Endothelial cell of umbilical vein (primary cell): ENCODE measurements at regions of chr4 and their contacts with region 1.

Region 1: DNA sequence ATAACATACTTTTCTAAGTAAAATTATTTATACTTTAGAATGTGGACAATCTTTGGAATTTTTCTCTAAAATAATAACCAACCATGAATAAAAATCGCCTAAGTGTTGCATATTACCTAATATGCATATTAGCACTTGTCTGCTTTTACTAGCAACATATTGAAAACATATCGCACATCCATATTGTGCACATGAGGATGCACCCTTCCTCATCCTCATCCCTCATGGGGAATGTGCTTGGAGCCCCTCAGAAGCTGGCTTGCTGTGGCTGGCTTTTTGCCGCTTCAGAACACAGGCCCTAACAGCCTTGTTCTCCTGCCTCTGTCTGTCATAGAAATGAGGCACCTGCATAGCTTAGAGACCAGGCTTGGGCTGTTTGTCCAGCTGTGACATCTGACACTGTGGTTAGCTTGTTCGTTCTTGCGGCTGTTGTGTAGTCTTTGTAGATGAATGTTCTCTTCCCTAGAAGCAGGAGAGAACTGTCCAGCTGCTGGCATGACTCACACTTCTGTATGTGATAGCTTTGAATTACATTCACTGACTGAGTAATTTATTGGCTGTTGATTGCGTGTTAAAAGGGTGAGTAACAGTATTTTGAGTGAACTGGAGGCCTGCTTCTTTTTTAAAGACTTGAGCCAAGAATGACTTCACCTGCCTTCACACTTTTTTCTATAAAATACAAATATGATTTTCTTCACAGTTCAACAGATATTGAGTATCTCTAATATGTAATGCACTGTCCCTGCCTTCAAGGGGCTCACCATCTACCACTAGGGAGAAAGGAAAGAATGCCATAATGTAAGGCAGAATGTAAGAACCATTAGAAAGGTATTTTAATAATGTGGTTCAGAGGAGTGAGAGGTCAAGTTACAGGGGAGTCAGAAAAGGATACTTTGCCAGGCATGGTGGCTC is 81.9 kb downstream of the HMGB2 start:
- DNase-seq: peak; percentile 99
- H3K4me3 ChIP-seq: no peak overlapping the region
- H3K27ac ChIP-seq: peak overlapping the region; percentile 67
- H3K4me1 ChIP-seq: peaks cover 25% of the 10 kb centered on the region
- H3K27me3 ChIP-seq: no peaks in the 10 kb centered on the region
- CTCF ChIP-seq: no peak
- POLR2A ChIP-seq: peak; percentile 41

Region 2: DNA sequence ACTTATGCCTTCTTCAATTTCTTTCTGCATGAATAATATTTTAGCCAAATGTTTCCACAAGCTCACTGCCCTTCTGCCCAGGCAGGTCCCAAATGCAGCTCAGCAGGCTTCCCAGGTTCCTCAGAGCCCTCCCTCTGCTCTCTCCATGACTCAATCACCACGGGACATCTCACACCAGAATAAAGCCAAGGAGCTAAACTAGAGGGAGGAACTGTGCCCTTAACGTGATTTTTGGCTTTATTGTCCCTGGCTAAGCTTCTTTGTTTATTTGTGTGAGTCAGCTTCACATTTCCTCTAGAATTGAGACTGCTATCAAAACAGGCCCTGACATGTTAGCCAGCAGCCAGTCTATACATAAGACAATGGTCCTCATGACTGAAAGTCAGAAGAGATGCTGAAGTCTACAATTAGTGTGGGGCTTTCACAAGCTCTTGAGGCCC is 270.1 kb before region 1 on chr4:
- CTCF ChIA-PET with region 1: interaction called, 3 read pairs
- POLR2A ChIA-PET with region 1: interaction called, 3 read pairs
- dilution Hi-C with region 1: no loop called
- intact Hi-C with region 1: loop called (anchors 1 kb)
- DNase-seq: peak; percentile 92
- H3K4me3 ChIP-seq: no peak overlapping the region
- H3K27ac ChIP-seq: peak overlapping the region; percentile 82
- H3K4me1 ChIP-seq: peaks cover 25% of the 10 kb centered on the region
- H3K27me3 ChIP-seq: no peaks in the 10 kb centered on the region
- CTCF ChIP-seq: no peak
- POLR2A ChIP-seq: no peak

Region 3: DNA sequence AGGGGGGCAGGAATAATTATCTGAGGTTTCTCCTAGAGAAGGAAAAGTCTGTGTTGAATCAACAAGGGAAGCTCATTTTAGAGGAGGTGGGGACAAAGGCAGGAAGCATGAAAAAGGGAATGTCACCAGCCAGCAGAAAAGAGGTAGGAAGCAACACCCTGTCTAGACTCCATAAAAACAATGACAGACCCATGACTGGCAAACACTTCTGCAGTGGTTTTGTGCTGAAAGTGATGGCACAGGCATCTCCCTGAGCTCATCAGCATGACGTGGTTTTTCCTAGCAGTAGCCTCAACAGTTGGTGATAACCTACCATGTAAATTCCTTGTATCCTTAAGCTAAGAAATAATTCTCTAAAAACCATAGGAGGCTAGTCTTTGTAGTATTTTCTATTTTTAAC is 194.4 kb before region 1 on chr4:
- CTCF ChIA-PET with region 1: interaction called, 3 read pairs
- POLR2A ChIA-PET with region 1: no interaction called
- dilution Hi-C with region 1: no loop called
- intact Hi-C with region 1: loop called (anchors 1 kb)
- DNase-seq: peak; percentile 74
- H3K4me3 ChIP-seq: no peak overlapping the region
- H3K27ac ChIP-seq: peak overlapping the region; percentile 74
- H3K4me1 ChIP-seq: peaks cover 28% of the 10 kb centered on the region
- H3K27me3 ChIP-seq: no peaks in the 10 kb centered on the region
- CTCF ChIP-seq: no peak
- POLR2A ChIP-seq: no peak

Region 4: DNA sequence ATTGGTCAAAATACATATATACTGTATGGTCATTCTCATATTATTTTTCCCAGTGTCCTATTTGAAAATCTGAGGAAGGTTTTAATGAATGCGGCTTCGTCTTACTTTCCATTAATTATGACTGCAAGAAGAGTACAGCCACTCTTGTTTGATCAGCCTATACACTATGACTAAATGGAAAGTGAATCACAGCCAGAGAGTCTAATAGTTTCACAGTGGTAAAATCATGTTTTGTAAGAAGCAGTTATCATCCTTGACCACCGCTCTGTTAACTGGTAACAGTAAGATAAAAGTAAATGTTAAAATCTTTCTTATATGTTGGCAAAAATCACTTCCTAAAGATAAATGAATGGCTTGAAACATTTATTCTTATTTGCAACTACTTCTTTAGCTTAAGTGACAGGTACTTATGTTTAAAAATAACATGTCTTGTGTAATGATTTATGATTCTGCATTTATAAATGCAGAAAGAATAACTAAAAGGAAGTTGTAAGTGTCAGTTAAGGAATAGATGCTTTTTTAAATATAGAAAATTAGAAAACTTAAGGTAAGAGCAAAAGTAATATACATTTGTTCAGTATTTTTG is 70.4 kb before region 1 on chr4:
- CTCF ChIA-PET with region 1: interaction called, 6 read pairs
- POLR2A ChIA-PET with region 1: no interaction called
- dilution Hi-C with region 1: no loop called
- intact Hi-C with region 1: loop called (anchors 2 kb)
- DNase-seq: peak; percentile 88
- H3K4me3 ChIP-seq: no peak overlapping the region
- H3K27ac ChIP-seq: peak overlapping the region; percentile 74
- H3K4me1 ChIP-seq: peaks cover 46% of the 10 kb centered on the region
- H3K27me3 ChIP-seq: no peaks in the 10 kb centered on the region
- CTCF ChIP-seq: no peak
- POLR2A ChIP-seq: no peak

Region 5: DNA sequence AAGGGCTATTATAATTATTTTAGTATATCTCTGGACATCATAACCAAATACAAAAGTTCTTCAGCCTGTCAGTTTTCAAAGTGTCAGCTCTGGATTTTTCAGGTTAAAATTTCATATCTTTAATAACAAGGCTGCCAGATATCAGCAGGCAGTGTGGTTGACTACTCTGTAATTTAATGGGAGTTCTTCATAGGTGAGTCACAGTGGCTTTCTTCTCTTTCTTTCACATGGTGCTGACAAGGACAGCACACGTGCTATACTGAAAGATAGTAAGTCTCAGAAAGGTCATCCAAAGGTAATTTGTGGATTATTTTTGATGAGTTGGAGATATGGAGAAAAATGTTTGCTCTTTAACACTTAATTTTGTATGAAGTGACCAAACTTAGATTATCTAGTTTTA is 40.4 kb before region 1 on chr4:
- CTCF ChIA-PET with region 1: interaction called, 11 read pairs
- POLR2A ChIA-PET with region 1: no interaction called
- dilution Hi-C with region 1: no loop called
- intact Hi-C with region 1: loop called (anchors 1 kb)
- DNase-seq: peak; percentile 53
- H3K4me3 ChIP-seq: no peak overlapping the region
- H3K27ac ChIP-seq: no peak overlapping the region
- H3K4me1 ChIP-seq: peaks cover 24% of the 10 kb centered on the region
- H3K27me3 ChIP-seq: no peaks in the 10 kb centered on the region
- CTCF ChIP-seq: no peak
- POLR2A ChIP-seq: no peak

Region 6: DNA sequence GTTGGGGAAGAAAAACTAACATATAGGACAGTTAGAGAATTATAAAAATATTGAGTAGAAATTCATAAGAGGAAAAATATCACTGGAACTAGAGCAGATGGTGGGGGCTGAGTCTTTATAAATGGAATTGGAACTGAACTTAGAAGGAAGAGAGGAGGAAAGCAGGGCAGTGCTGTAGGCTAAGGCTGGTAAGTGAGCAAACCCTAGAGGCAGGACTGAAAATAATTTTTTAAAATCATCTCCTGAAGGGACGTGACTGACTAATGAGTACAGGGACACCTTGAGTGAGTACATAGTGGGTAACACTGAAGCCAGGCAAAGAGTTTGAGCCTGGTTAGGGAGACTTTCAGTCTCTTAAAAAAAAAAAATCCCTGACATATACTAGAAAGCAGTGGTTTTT is 20.4 kb before region 1 on chr4:
- CTCF ChIA-PET with region 1: interaction called, 4 read pairs
- POLR2A ChIA-PET with region 1: no interaction called
- dilution Hi-C with region 1: no loop called
- intact Hi-C with region 1: loop called (anchors 1 kb)
- DNase-seq: peak; percentile 79
- H3K4me3 ChIP-seq: no peak overlapping the region
- H3K27ac ChIP-seq: peak overlapping the region; percentile 6
- H3K4me1 ChIP-seq: peaks cover 9% of the 10 kb centered on the region
- H3K27me3 ChIP-seq: no peaks in the 10 kb centered on the region
- CTCF ChIP-seq: peak; percentile 10 to 39
- POLR2A ChIP-seq: no peak

Region 7: GRCh38 chr4:173370477-173371291 is 118.4 kb after region 1 on chr4 and contains the start of gene SAP30:
- CTCF ChIA-PET with region 1: interaction called, 3 read pairs
- POLR2A ChIA-PET with region 1: interaction called, 3 read pairs
- dilution Hi-C with region 1: no loop called
- intact Hi-C with region 1: loop called (anchors 1 kb)
- DNase-seq: peak; percentile 99
- H3K4me3 ChIP-seq: peak within 1 kb of the TSS; percentile 87 to 99 (median 91)
- H3K27ac ChIP-seq: peak within 1 kb of the TSS; percentile 93
- H3K4me1 ChIP-seq: peaks cover 24% of the 10 kb centered on the region
- H3K27me3 ChIP-seq: no peaks in the 10 kb centered on the region
- CTCF ChIP-seq: no peak
- POLR2A ChIP-seq: peak; percentile 95
- total RNA-seq, gene SAP30: 23.8 and 27.1 TPM in 2 replicates